CD4-positive, alpha-beta memory T cell (primary cell): ENCODE measurements at regions of chr20 and their contacts with region 1.

Region 1: GRCh38 chr20:35954200-35954906 is at the start of gene SCAND1:
- DNase-seq: peak; percentile 97 to 99 (median 98)
- H3K4me3 ChIP-seq: peak within 1 kb of the TSS; percentile 64 to 96
- H3K4me3 Mint-ChIP-seq: peak within 1 kb of the TSS; percentile 99 to 100 (median 99)
- H3K27ac ChIP-seq: peak within 1 kb of the TSS; percentile 96
- H3K27ac Mint-ChIP-seq: peak within 1 kb of the TSS; percentile 99 to 100 (median 99)
- H3K4me1 ChIP-seq: peaks cover 25% of the 10 kb centered on the region
- H3K4me1 Mint-ChIP-seq: peaks cover 6 to 35% (median 14%) of the 10 kb centered on the region in 4 donors
- H3K27me3 ChIP-seq: no peaks in the 10 kb centered on the region
- H3K27me3 Mint-ChIP-seq: no peaks in the 10 kb centered on the region
- total RNA-seq, gene SCAND1: 45.1 to 53.8 TPM

Region 2: GRCh38 chr20:35410613-35411012 is 543.7 kb before region 1 on chr20:
- CTCF ChIA-PET with region 1: no interaction called
- POLR2A ChIA-PET with region 1: interaction called, 10 read pairs
- intact Hi-C with region 1: loop called (anchors 5 kb)
- DNase-seq: no peak
- H3K4me3 ChIP-seq: peak overlapping the region in 1 of 2 donors; percentile 61
- H3K4me3 Mint-ChIP-seq: peak overlapping the region in 7 of 8 donors; percentile 97 to 100 (median 98)
- H3K27ac ChIP-seq: no peak overlapping the region
- H3K27ac Mint-ChIP-seq: peak overlapping the region in 6 of 7 donors; percentile 20 to 100 (median 94)
- H3K4me1 ChIP-seq: peaks cover 14% of the 10 kb centered on the region
- H3K4me1 Mint-ChIP-seq: peaks cover 11 to 17% (median 15%) of the 10 kb centered on the region in 4 donors
- H3K27me3 ChIP-seq: no peaks in the 10 kb centered on the region
- H3K27me3 Mint-ChIP-seq: peaks cover 0 to 2% of the 10 kb centered on the region in 2 donors

Region 3: DNA sequence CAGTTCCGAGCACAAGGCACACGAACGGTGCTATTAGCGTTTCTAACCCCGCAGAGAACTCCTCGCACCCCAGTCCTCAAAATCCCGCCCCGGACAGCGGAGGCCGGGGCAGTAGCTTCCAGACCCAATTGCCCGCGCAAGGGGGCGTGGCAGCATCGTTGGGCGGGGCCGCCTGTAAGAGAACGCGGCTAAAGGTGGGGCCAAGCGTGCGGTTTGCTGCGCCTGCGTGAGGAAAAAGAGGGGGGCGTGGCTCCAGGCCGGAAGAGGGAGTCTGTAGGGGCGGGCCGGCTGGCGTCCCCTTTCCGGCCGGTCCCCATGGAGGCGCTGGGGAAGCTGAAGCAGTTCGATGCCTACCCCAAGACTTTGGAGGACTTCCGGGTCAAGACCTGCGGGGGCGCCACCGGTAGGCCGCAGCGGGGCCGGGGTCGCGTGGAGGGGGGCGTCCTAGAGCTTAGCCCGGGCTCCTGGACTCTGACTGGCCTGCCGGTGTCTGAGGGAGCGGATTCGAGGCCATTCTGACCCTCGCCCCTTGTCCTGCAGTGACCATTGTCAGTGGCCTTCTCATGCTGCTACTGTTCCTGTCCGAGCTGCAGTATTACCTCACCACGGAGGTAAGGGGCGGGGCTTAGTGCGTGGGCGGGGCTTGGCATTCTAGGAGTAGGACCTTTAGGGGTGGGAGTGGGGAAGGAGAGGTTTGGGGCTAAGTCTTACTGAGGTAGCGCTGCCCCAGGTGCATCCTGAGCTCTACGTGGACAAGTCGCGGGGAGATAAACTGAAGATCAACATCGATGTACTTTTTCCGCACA is 412.4 kb before region 1 on chr20 and contains the start of gene ERGIC3:
- CTCF ChIA-PET with region 1: interaction called, 4 read pairs
- POLR2A ChIA-PET with region 1: interaction called, 5 read pairs
- intact Hi-C with region 1: loop called (anchors 1 kb)
- DNase-seq: peak; percentile 95 to 96 (median 95)
- H3K4me3 ChIP-seq: peak within 1 kb of the TSS; percentile 37 to 76
- H3K4me3 Mint-ChIP-seq: peak within 1 kb of the TSS; percentile 86 to 93 (median 90)
- H3K27ac ChIP-seq: peak within 1 kb of the TSS; percentile 78
- H3K27ac Mint-ChIP-seq: peak within 1 kb of the TSS; percentile 86 to 95 (median 92)
- H3K4me1 ChIP-seq: peaks cover 15% of the 10 kb centered on the region
- H3K4me1 Mint-ChIP-seq: peaks cover 11 to 28% (median 21%) of the 10 kb centered on the region in 4 donors
- H3K27me3 ChIP-seq: no peaks in the 10 kb centered on the region
- H3K27me3 Mint-ChIP-seq: no peaks in the 10 kb centered on the region
- total RNA-seq, gene ERGIC3: 148 to 151 TPM

Region 4: DNA sequence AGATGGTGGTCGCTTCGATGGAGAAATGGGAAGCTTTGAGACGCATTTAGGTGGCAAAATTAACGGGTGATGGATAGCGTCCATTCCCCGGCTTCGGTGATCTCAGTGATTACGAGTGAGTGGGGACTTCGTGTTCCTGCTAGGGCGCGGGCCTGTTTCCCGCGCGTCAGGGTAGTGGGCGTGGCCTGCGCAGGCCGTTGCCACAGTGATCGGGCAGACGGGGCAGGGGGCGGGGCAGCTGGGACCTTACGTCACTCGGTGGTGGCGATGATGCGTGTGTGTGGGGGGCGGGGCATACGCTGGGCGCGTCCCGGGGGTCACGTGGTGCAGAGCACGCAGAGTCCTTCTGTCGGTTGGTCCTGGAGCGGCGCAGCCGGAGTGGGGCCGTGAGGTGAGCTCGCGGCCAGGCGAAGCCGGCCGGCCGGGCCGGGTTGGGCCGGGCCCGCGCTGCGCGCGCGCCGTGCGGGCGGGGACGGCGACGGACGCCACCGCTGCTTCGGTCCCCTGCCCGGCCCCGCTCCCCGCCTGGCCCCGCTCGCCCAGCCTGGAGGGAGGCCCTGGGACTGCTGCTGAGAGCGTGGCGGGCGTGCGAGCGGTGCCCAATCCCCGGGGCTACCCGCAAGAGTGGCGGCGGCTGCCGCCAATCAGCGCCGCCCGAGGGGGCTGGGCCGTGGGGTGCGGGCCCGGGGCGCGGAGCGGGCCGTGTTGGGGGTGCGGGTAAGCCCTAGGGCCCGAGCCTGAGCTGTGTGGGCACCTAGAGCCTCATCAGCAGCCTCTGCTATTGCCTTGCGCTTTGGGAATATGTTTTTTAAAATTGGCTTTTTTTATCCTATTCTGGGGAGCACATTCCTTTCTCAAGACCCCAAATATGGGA is 182.4 kb before region 1 on chr20 and contains the start of gene PHF20:
- CTCF ChIA-PET with region 1: interaction called, 7 read pairs
- POLR2A ChIA-PET with region 1: interaction called, 28 read pairs
- intact Hi-C with region 1: loop called (anchors 5 kb)
- DNase-seq: peak; percentile 99 to 100 (median 99)
- H3K4me3 ChIP-seq: peak within 1 kb of the TSS; percentile 49 to 79
- H3K4me3 Mint-ChIP-seq: peak within 1 kb of the TSS; percentile 87 to 93 (median 91)
- H3K27ac ChIP-seq: peak within 1 kb of the TSS; percentile 94
- H3K27ac Mint-ChIP-seq: peak within 1 kb of the TSS; percentile 96 to 100 (median 100)
- H3K4me1 ChIP-seq: peaks cover 89% of the 10 kb centered on the region
- H3K4me1 Mint-ChIP-seq: peaks cover 57 to 93% (median 72%) of the 10 kb centered on the region in 4 donors
- H3K27me3 ChIP-seq: no peaks in the 10 kb centered on the region
- H3K27me3 Mint-ChIP-seq: no peaks in the 10 kb centered on the region
- total RNA-seq, gene PHF20: 72.9 to 82.3 TPM

Region 5: GRCh38 chr20:36064658-36065426 is 110.5 kb after region 1 on chr20:
- CTCF ChIA-PET with region 1: interaction called, 6 read pairs
- POLR2A ChIA-PET with region 1: interaction called, 12 read pairs
- intact Hi-C with region 1: no loop called
- DNase-seq: peak; percentile 89 to 94 (median 90)
- H3K4me3 ChIP-seq: peak overlapping the region; percentile 47 to 75
- H3K4me3 Mint-ChIP-seq: peak overlapping the region; percentile 87 to 92 (median 89)
- H3K27ac ChIP-seq: peak overlapping the region; percentile 45
- H3K27ac Mint-ChIP-seq: peak overlapping the region; percentile 60 to 89 (median 77)
- H3K4me1 ChIP-seq: peaks cover 11% of the 10 kb centered on the region
- H3K4me1 Mint-ChIP-seq: peaks cover 0 to 5% (median 4%) of the 10 kb centered on the region in 4 donors
- H3K27me3 ChIP-seq: no peaks in the 10 kb centered on the region
- H3K27me3 Mint-ChIP-seq: peaks cover 0 to 3% of the 10 kb centered on the region in 2 donors

Region 6: DNA sequence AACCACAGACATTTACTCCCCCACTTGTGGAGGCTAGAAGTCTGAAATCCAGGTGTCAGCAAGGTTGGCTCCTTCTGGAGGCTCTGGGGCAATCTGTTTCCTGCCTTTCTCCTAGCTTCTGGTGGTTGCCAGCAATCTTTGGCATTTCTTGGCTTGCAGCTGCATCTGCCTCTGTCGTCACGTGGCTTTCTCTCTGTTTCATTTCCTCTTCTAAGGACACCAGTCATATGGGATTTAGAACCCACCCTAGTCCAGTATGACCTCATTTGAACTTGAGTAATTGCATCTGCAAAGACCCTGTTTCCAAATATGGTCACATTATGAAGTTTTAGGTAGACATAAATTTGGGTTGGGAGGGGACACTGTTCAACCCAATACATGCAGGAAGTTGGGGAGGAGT is 144.0 kb after region 1 on chr20:
- CTCF ChIA-PET with region 1: no interaction called
- POLR2A ChIA-PET with region 1: no interaction called
- intact Hi-C with region 1: no loop called
- DNase-seq: no peak
- H3K4me3 ChIP-seq: no peak overlapping the region
- H3K4me3 Mint-ChIP-seq: no peak overlapping the region
- H3K27ac ChIP-seq: no peak overlapping the region
- H3K27ac Mint-ChIP-seq: no peak overlapping the region
- H3K4me1 ChIP-seq: peaks cover 8% of the 10 kb centered on the region
- H3K4me1 Mint-ChIP-seq: peaks cover 0 to 9% (median 4%) of the 10 kb centered on the region in 4 donors
- H3K27me3 ChIP-seq: peaks cover 3% of the 10 kb centered on the region
- H3K27me3 Mint-ChIP-seq: peaks cover 7% of the 10 kb centered on the region in 2 donors